Activated T-helper 2 cell treated with anti-CD3 and anti-CD28 coated beads, Interferon-gamma antibody, Interleukin-2, Interleukin-4, amounts not matched to agents 10 μg/mL and 5 μg/mL and 100 μg/mL, durations not matched to agents 14 hours and 24 hours and 36 hours (primary cell): ENCODE measurements at regions of chr16 and their contacts with region 1.

Region 1: DNA sequence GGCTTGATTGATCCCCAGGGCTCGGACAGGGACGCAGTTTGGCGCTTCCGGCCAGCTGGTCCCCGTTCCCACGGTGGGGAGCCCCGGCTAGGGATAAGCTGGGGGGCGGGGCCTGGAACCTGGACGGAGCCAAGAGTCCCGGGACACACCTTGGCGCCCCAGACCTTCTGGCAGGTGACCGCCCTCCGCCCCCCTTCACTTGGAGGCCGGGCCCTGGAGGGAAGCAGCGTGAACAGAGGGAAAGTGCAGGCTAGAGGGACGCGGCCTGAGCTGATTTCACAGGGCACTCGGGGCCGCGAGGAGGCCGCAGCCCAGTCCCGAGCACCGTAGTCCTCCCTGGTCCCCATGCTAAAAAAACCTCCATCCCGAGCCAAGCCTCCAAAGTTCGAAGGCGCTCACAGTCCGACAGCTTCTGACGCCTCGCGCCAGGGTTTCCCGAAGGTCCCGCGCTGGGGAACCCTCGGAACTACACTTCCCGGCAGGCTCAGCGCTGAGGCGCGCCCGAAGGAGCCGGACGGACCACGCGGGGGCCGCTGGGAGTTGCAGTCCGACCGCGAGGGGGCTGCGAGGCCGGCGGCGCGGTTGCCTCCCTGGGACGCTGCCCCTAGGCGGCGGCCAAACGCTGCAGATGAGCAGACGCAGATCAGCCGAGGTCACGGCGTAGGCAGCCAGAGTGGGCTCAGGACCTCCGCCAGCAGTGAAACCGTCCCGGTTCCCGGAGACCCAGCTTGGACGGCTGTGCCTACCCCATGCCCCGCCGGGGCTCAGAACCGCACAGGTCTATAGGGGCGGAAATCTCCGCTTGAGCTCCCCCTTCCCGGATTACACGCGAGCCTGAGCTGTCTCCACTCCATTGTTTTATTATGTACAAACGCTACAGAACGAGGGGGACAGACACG is at the start of gene TBX6:
- DNase-seq: peak; percentile 92
- H3K4me3 Mint-ChIP-seq: peak within 1 kb of the TSS; percentile 88
- H3K27ac Mint-ChIP-seq: peak within 1 kb of the TSS; percentile 97
- H3K4me1 Mint-ChIP-seq: peaks cover 37% of the 10 kb centered on the region
- H3K27me3 Mint-ChIP-seq: no peaks in the 10 kb centered on the region
- total RNA-seq, gene TBX6: 2.7 and 2.9 TPM in 2 replicates

Region 2: GRCh38 chr16:29891525-29892457 is 199.9 kb before region 1 on chr16:
- intact Hi-C with region 1: no loop called
- DNase-seq: no peak
- H3K4me3 Mint-ChIP-seq: no peak overlapping the region
- H3K27ac Mint-ChIP-seq: no peak overlapping the region
- H3K4me1 Mint-ChIP-seq: no peaks in the 10 kb centered on the region
- H3K27me3 Mint-ChIP-seq: peaks cover 5% of the 10 kb centered on the region

Region 3: DNA sequence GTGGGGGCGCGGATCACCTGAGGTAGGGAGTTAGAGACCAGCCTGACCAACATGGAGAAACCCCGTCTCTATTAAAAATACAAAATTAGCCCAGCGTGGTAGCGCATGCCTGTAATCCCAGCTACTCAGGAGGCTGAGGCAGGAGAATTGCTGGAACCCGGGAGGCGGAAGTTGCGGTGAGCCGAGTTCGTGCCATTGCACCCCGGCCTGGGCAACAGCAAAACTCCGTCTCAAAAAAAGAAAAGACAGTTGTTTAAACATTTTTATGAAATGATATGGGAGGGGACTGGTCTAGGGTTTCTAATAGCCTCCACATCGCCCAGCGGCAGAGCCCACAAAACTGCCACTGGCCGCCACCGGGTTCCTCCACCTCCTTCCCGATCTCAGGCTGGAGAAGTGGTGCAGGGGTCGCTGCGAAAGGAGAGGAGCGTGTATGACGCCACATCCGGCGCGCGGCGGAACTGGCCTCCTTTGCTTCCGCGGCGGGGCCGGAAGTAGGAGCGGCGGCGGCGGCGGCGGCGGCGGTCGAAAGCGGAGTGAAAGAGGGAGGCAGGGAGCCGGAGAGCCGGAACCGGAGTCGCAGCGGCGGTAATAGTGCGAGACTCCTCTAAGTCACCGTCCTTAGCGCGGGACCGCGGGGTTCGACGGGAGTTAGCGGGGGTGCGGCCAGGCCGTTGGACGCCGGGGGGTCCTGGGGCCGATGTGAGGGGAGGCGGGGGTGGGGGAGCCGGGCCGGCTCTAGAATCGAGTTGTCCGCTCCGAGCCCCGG is 16.0 kb before region 1 on chr16 and contains the start of gene PPP4C:
- intact Hi-C with region 1: loop called (anchors 1 kb)
- DNase-seq: peak; percentile 89
- H3K4me3 Mint-ChIP-seq: peak within 1 kb of the TSS; percentile 93
- H3K27ac Mint-ChIP-seq: peak within 1 kb of the TSS; percentile 93
- H3K4me1 Mint-ChIP-seq: peaks cover 26% of the 10 kb centered on the region
- H3K27me3 Mint-ChIP-seq: no peaks in the 10 kb centered on the region
- total RNA-seq, gene PPP4C: 143 and 144 TPM in 2 replicates

Region 4: DNA sequence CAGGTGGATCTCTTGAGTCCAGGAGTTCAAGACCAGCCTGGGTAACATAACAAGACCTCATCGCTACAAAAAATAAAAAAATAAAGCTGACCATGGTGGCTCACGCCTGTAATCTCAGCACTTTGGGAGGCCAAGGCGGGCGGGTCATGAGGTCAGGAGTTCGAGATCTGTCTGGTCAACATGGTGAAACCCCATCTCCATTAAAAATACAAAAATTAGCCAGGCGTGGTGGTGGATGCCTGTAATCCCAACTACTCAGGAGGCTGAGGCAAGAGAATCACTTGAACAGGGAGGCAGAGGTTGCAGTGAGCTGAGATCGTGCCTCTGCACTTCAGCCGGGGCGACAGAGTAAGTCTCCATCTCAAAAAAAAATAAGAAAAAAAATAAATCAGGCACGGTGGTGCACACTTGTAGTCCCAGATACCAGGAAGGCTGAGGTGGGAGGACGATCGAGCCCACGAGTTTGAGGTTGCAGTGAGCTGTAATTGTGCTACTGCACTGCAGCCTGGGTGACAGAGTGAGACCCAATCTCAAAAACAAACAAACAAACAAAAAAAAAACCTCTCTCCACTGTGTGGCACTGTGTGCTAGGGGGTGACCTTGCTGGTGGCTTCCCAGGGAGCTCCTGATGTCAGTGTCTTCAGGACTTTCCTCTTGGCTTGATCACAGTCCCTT is 51.1 kb after region 1 on chr16:
- intact Hi-C with region 1: no loop called
- DNase-seq: peak; percentile 17
- H3K4me3 Mint-ChIP-seq: no peak overlapping the region
- H3K27ac Mint-ChIP-seq: peak overlapping the region; percentile 29
- H3K4me1 Mint-ChIP-seq: peaks cover 20% of the 10 kb centered on the region
- H3K27me3 Mint-ChIP-seq: no peaks in the 10 kb centered on the region